CD14-positive monocyte (primary cell): ENCODE measurements at regions of chrX and their contacts with region 1.

Region 1: DNA sequence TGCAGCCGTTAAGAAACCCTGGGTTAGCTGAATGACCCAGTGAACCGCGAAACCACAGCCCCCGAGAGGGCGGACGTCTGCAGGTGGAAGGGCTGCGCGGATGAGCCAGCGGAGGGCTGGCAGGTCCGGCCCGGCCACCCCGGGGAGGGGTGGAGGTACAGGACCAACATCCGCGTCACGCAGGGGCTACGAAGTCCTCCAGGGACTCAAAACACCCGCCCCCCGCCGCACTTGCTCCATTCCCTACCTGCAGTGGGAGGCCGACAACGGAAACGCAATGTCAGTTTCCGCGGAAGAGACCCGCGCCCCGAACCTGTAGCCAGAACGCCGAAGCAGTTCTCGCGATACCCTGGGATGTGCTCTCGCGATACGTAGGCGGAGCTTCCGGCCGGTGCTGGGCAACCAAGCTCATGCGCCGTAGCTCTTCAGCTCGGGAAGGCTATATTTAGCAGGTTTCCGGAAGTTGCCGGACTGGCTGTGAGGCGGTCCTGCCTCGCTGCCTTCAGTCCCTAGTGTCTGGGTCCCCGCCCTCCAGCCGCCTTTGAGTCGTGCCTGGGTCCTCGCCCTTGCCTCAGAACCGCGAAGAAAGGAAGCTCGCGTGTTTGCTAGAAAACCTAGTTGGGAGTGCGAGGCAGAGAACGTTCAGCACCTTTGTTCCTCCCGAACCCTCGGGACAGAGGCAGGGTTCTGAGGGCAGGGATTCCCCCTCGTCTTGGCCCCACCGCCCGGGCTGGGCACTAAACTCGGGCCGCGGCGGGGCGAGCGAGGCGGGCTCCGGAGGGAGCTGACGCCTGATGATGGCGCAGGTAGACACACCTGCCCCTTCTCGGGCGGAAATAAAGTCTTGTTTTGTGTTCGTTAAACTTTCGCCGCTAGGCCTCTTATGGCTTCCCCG is at the starts of genes OFD1 and TRAPPC2:
- DNase-seq: peak; percentile 93 to 96 (median 94)
- H3K4me3 ChIP-seq: peak within 1 kb of the TSS; percentile 63 to 95 (median 78)
- H3K4me3 Mint-ChIP-seq: peak within 1 kb of the TSS; percentile 85 to 95
- H3K27ac ChIP-seq: peak within 1 kb of the TSS; percentile 82 to 95
- H3K27ac Mint-ChIP-seq: peak within 1 kb of the TSS; percentile 87 to 98 (median 95)
- H3K4me1 ChIP-seq: peaks cover 16 to 35% of the 10 kb centered on the region in 2 donors
- H3K4me1 Mint-ChIP-seq: peaks cover 47% of the 10 kb centered on the region
- H3K27me3 ChIP-seq: peaks cover 0 to 18% of the 10 kb centered on the region in 2 donors
- H3K27me3 Mint-ChIP-seq: peaks cover 0 to 26% (median 0%) of the 10 kb centered on the region in 3 donors
- CTCF ChIP-seq: no peak
- polyA plus RNA-seq, gene OFD1: 2.4 to 10.2 (median 2.9) TPM
- polyA plus RNA-seq, gene TRAPPC2: 10.6 to 18.3 (median 12.2) TPM

Region 2: DNA sequence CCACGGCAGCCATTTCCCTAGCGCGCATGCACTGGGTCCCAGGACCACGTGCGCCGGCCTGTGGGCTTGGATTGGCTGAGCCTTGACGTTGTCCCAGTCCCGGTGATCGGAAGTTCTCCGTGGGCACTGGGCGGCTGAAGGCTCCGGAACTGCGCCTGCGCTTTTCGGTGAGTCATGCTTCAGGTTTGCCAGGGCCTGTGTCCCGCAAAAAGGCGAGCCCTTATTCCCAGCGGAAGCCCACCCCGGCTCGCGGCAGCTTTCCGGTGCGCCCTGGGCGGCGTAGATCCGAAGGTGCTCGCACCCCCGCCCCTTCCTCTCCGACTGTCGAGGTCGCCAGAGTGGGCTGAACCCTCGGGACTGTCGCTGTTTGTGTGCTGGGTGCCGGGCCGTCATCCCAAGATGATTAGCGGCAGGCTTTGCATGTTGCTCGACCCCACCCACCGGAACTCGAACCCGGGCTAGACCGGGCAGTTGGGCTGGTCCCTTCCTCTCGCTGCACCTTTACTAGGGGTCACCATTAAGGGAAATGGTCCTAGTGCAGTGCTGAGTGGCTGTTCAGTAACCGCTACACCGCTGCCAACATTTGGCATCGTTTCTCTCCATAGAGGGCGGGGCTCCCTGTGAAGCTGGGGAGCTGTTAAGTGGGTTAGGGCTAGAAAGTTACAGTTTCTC is 81.4 kb before region 1 on chrX and contains the start of gene TCEANC:
- intact Hi-C with region 1: loop called (anchors 10 kb)
- DNase-seq: peak; percentile 92 to 96 (median 94)
- H3K4me3 ChIP-seq: peak within 1 kb of the TSS; percentile 42 to 83 (median 72)
- H3K4me3 Mint-ChIP-seq: peak within 1 kb of the TSS; percentile 85 to 90
- H3K27ac ChIP-seq: peak within 1 kb of the TSS; percentile 89 to 99
- H3K27ac Mint-ChIP-seq: peak within 1 kb of the TSS; percentile 88 to 97 (median 95)
- H3K4me1 ChIP-seq: peaks cover 12 to 21% of the 10 kb centered on the region in 2 donors
- H3K4me1 Mint-ChIP-seq: peaks cover 4% of the 10 kb centered on the region
- H3K27me3 ChIP-seq: no peaks in the 10 kb centered on the region
- H3K27me3 Mint-ChIP-seq: peaks cover 0 to 26% (median 1%) of the 10 kb centered on the region in 3 donors
- CTCF ChIP-seq: no peak
- polyA plus RNA-seq, gene TCEANC: 1.6 to 2.8 (median 1.9) TPM

Region 3: DNA sequence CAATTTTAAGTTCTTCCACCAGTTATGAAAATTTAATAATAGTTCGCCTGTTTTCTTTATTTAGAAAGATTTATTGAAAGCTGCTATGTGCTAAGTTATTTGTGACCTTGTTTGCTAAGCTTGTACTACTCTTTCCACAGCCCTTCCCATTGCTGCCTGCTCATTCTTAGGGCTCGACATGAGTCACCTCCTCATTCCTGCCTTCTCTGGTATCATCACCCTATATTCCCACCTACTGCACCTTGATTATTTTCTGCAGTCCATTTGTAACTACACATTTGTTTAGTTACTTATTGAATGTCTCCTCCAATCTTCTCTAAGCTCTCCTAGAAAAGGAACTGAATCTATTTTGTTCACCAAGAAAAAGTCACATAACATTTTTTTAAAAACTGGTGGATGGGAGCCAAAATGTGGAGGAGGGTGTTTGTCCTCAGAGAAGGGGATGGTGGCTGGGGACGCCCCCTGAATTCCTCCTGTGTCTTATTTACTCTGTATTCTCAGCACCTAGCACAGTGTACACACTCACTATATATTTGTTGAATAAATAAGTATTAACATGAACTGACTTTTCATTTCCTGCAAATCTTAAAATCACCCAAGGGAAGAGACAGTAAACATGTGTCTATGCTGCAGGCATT is 49.3 kb before region 1 on chrX:
- intact Hi-C with region 1: no loop called
- DNase-seq: no peak
- H3K4me3 ChIP-seq: no peak overlapping the region
- H3K4me3 Mint-ChIP-seq: no peak overlapping the region
- H3K27ac ChIP-seq: no peak overlapping the region
- H3K27ac Mint-ChIP-seq: no peak overlapping the region
- H3K4me1 ChIP-seq: peaks cover 2 to 4% of the 10 kb centered on the region in 2 donors
- H3K4me1 Mint-ChIP-seq: peaks cover 12% of the 10 kb centered on the region
- H3K27me3 ChIP-seq: peaks cover 0 to 9% of the 10 kb centered on the region in 2 donors
- H3K27me3 Mint-ChIP-seq: peaks cover 0 to 32% (median 3%) of the 10 kb centered on the region in 3 donors
- CTCF ChIP-seq: no peak

Region 4: DNA sequence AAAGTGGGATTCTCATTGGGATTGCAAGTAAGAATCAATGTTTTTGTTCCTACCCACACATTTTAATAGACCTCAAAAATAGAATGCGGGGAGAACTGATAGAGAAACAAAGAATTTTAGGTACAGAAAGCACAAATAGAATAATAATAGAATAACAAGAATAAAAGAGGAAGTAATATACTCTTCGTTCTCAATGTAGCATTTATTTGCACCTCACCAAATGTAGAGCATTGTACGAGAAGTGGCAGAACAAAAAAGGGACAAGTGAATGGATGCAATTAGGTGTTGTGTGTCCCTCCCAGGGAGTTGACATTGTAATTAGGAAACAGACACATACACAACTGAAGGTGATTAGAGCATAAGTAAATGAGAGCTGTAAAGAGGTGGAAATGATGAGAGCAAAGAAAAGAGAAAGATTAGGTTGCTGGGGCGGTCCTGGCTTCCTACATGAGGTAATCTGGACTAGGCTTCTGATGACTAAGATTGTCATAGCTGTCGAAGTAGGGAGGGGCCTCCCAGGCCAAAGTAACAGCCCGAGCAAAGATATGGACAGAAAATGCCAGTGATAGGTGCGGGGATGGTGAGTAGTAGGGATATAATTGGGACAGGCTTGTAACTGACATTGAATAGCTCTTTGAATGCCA is 35.2 kb before region 1 on chrX:
- intact Hi-C with region 1: loop called in 1 of 2 experiments (anchors 5 kb)
- DNase-seq: peak in 2 of 3 donors; percentile 33 to 60
- H3K4me3 ChIP-seq: no peak overlapping the region
- H3K4me3 Mint-ChIP-seq: peak overlapping the region in 1 of 2 donors; percentile 36
- H3K27ac ChIP-seq: peak overlapping the region in 1 of 2 donors; percentile 45
- H3K27ac Mint-ChIP-seq: peak overlapping the region; percentile 24 to 84 (median 72)
- H3K4me1 ChIP-seq: peaks cover 58 to 60% of the 10 kb centered on the region in 2 donors
- H3K4me1 Mint-ChIP-seq: peaks cover 70% of the 10 kb centered on the region
- H3K27me3 ChIP-seq: peaks cover 0 to 2% of the 10 kb centered on the region in 2 donors
- H3K27me3 Mint-ChIP-seq: peaks cover 0 to 9% (median 1%) of the 10 kb centered on the region in 3 donors
- CTCF ChIP-seq: no peak